Spleen (tissue), 13 donors: ENCODE measurements at regions of chr1 and their contacts with region 1.

Region 1: GRCh38 chr1:231364192-231364591 is 26.1 kb downstream of the SPRTN start:
- DNase-seq: no peak
- H3K4me3 ChIP-seq: no peak overlapping the region
- H3K27ac ChIP-seq: no peak overlapping the region
- H3K4me1 ChIP-seq: peaks cover 0 to 7% (median 0%) of the 10 kb centered on the region in 6 donors
- H3K27me3 ChIP-seq: no peaks in the 10 kb centered on the region
- CTCF ChIP-seq: no peak
- POLR2A ChIP-seq: no peak

Region 2: GRCh38 chr1:231590453-231591198 is 226.4 kb after region 1 on chr1:
- intact Hi-C with region 1: loop called (anchors 5 kb)
- DNase-seq: no peak
- H3K4me3 ChIP-seq: no peak overlapping the region
- H3K27ac ChIP-seq: no peak overlapping the region
- H3K4me1 ChIP-seq: peaks cover 0 to 24% (median 11%) of the 10 kb centered on the region in 6 donors
- H3K27me3 ChIP-seq: no peaks in the 10 kb centered on the region
- CTCF ChIP-seq: peak; percentile 41 to 79 (median 69)
- POLR2A ChIP-seq: no peak

Region 3: DNA sequence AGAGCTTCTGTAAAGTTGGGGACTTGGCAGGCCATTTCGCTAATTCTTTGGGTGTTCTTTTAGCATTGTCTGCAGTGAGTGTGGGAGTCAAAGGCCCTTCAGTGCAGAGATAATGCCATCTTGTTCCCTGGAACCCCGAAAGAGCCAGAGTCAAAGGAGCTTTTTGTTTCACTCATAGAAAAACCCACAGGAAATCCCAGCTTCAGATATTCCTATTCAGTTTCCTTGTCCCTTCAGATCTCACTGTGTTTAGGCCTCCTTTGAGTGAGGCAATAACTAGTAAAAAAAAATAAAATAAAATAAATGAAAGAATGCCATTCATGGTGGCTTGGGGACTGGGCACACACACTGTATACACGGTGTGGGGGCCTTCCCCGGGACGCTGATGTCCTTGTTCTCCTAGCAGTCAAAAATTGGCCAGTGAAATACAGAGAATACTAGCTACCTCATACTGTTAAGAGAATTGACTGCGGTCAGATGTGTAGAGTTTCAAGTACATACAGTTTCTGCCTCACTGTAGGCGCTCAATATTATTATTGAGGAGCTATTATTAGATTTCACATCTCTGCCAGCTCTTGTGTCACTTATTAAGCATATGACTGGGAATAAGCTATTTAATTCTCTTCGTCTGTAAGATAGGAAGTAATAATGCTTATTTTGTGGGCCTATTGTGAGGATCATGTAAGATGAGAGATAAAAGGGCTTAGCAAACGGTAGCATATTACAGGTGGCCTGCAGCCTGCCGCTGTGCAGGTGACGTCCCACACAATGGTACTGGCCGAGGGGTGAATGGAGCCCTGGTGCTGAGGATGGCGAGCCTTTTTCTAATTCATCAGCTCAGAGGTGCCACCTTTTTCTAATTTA is 279.1 kb after region 1 on chr1:
- intact Hi-C with region 1: no loop called
- DNase-seq: no peak
- H3K4me3 ChIP-seq: no peak overlapping the region
- H3K27ac ChIP-seq: no peak overlapping the region
- H3K4me1 ChIP-seq: peaks cover 0 to 4% (median 0%) of the 10 kb centered on the region in 6 donors
- H3K27me3 ChIP-seq: no peaks in the 10 kb centered on the region
- CTCF ChIP-seq: no peak
- POLR2A ChIP-seq: no peak